ENCODE measurements at regions of chr9 and their contacts with region 1.

Region 1: DNA sequence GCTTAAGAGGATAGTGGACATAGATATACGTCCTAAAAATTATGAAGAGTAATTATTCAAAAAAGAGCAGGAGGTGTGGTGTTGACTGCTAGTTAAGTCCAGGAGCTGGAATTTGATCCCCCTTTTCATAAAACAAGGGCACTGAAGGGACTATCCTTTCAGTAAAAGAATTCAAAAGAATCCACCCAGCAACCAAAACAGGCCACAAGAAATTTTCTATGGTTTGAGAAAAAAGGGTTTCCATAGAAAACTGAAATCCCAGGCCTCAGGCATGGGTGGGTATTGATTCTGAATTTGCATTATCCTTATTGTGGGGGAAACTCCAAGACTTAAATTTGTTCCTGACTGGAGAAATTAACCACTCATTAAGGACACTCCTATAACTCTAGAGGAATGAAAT is 269.0 kb upstream of the MPDZ start:
- DNase-seq: no peak
- H3K4me3 Mint-ChIP-seq: no peak overlapping the region
- H3K27ac Mint-ChIP-seq: no peak overlapping the region
- H3K4me1 Mint-ChIP-seq: no peaks in the 10 kb centered on the region
- H3K27me3 Mint-ChIP-seq: no peaks in the 10 kb centered on the region

Region 2: GRCh38 chr9:13607481-13608441 is 59.2 kb after region 1 on chr9:
- CTCF ChIA-PET with region 1: no interaction called
- POLR2A ChIA-PET with region 1: no interaction called
- intact Hi-C with region 1: loop called (anchors 10 kb)
- DNase-seq: no peak
- H3K4me3 Mint-ChIP-seq: no peak overlapping the region
- H3K27ac Mint-ChIP-seq: no peak overlapping the region
- H3K4me1 Mint-ChIP-seq: no peaks in the 10 kb centered on the region
- H3K27me3 Mint-ChIP-seq: no peaks in the 10 kb centered on the region

Measured in activated CD4-positive, alpha-beta memory T cell treated with anti-CD3 and anti-CD28 coated beads for 36 hours (primary cell).